Right cardiac atrium (tissue), 5 donors: ENCODE measurements at regions of chr12 and their contacts with region 1.

Region 1: GRCh38 chr12:114447274-114447716 is 41.4 kb upstream of the TBX5 start:
- DNase-seq: peak; percentile 43 to 86 (median 81)
- ATAC-seq: peak; percentile 10 to 33
- H3K4me3 ChIP-seq: peak overlapping the region; percentile 27
- H3K27ac ChIP-seq: peak overlapping the region; percentile 93
- H3K4me1 ChIP-seq: peaks cover 2% of the 10 kb centered on the region
- H3K27me3 ChIP-seq: no peaks in the 10 kb centered on the region

Region 2: DNA sequence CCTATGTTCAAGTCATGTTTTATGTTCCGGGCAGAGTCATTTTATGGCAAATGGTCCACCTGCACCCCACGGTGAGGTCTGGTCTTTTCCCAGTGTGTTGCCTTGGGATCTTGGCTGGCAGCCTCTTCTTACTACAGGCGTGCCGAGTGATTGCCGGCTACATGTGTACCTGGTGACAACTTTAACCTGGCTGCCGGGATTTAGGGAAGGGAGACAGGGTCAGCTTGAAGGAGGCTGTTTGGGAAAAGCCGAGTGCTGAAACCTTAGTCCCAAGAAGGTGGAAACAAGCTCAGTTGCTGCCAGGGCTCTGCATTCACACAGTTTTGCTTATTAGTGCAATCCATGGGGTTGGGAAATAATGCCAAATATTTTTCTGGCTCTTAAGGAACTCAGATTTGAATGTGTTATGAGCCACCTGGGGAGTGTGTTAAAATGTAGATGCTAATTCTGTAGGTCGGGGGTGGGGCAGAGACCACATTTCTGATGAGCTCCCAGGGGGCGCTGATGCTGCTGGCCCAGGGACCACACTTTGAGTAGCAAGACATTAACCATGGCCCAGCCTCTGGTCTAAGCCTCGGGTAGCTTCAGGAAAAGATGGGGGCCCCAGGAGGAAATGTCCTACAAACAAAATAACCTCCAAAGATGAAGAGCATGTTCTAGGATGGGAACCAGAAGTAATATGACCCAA is 220.9 kb before region 1 on chr12:
- intact Hi-C with region 1: no loop called
- DNase-seq: no peak
- ATAC-seq: no peak
- H3K4me3 ChIP-seq: no peak overlapping the region
- H3K27ac ChIP-seq: no peak overlapping the region
- H3K4me1 ChIP-seq: peaks cover 2% of the 10 kb centered on the region
- H3K27me3 ChIP-seq: no peaks in the 10 kb centered on the region

Region 3: GRCh38 chr12:114403011-114403689 is 44.1 kb before region 1 on chr12:
- intact Hi-C with region 1: loop called in 3 of 4 experiments (anchors 5 kb)
- DNase-seq: peak; percentile 36 to 77 (median 71)
- ATAC-seq: peak; percentile 14 to 32
- H3K4me3 ChIP-seq: peak overlapping the region; percentile 83
- H3K27ac ChIP-seq: peak overlapping the region; percentile 82
- H3K4me1 ChIP-seq: no peaks in the 10 kb centered on the region
- H3K27me3 ChIP-seq: no peaks in the 10 kb centered on the region

Region 4: GRCh38 chr12:114408886-114409851 is 38.1 kb before region 1 on chr12:
- intact Hi-C with region 1: loop called in 3 of 4 experiments (anchors 5 kb)
- DNase-seq: peak; percentile 74 to 92 (median 89)
- ATAC-seq: peak; percentile 60 to 65
- H3K4me3 ChIP-seq: peak overlapping the region; percentile 83
- H3K27ac ChIP-seq: peak overlapping the region; percentile 91
- H3K4me1 ChIP-seq: no peaks in the 10 kb centered on the region
- H3K27me3 ChIP-seq: no peaks in the 10 kb centered on the region